A549 (cell line): ENCODE measurements at regions of chr2 and their contacts with region 1.

Region 1: DNA sequence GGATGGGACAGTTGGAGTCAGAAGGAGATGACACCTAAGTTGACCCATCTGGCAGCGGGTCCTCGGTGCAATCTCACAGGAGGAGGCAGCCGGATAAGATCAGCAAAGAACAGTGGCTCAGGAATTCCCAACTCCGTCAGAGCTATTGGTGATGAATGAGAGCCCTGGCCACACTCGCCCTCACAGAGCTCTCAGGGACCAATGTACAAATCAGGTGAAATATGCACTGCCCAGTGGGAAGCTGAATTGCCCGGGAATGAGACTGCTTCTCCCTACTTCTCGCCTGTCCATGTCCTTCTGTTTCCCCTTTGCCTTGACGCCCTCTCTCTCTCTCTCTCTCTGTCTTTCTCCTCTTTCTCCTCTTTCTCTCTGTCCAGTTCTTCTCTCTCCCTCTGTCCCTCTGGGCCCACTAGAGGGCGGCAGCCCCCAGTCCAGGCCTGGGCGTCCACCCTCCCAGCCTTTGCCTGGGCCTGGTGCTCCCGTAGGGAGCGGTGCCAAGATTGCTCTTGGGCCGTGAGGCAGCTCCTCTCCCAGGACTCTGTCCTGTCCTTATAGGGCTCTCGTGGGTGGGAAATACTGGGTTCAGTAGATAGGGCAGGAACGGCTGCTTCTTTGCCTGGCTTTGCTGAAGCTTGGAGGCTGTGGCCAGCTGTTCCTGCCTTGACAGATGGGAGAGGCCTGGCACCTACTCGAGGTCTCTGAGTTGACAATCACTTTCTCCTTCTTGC is 28.3 kb upstream of the PUM2 start:
- DNase-seq: peak; percentile 77 to 78
- ATAC-seq: peak; percentile 98 to 99
- H3K4me3 ChIP-seq: no peak overlapping the region
- H3K27ac ChIP-seq: peak overlapping the region; percentile 23 to 58; a peak in 4 of 6 replicates
- H3K4me1 ChIP-seq: peaks cover 10% of the 10 kb centered on the region; the same call in 1 of the 3 replicates
- CTCF ChIP-seq: peak; percentile 80
- EP300 ChIP-seq: no peak
- POLR2A ChIP-seq: no peak
- RAD21 ChIP-seq: peak; percentile 80 to 85

Region 2: GRCh38 chr2:20326163-20326780 is 52.7 kb before region 1 on chr2:
- CTCF ChIA-PET with region 1: interaction called, 10 read pairs
- POLR2A ChIA-PET with region 1: no interaction called
- DNase-seq: peak; percentile 50 to 66
- ATAC-seq: peak; percentile 97 to 98
- H3K4me3 ChIP-seq: no peak overlapping the region
- H3K27ac ChIP-seq: no peak overlapping the region
- H3K4me1 ChIP-seq: peaks cover 21% of the 10 kb centered on the region
- CTCF ChIP-seq: peak; percentile 95
- EP300 ChIP-seq: no peak
- POLR2A ChIP-seq: no peak
- RAD21 ChIP-seq: peak; percentile 69

Region 3: DNA sequence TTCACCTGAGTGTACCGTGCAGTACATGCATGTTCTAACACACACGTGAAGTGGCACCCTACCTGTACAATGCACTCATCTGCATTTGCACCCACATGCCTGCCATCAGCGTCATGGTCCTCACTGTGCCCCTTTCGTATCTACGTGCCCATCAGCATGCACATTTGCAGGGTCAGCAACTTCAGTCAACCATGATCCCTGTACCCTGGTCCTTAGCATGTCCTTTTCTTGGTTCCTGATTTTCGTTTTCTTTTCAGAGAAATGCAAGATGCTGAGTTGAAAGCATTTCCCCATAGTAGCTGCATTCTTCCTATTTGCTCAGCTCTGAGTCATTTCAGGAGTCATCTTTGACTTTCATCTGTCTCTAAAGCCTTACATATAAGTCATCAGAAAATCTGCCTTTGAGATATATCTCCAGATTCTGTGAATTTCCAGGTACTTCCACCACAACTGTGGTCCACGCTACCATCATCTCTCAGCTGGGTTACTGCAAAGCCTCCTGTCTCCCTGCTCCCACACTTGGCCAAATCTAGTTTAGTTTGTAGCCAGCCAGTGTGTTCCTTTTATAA is 13.6 kb before region 1 on chr2:
- CTCF ChIA-PET with region 1: interaction called, 53 read pairs
- POLR2A ChIA-PET with region 1: no interaction called
- DNase-seq: peak; percentile 45 to 55
- ATAC-seq: peak; percentile 89 to 93
- H3K4me3 ChIP-seq: no peak overlapping the region
- H3K27ac ChIP-seq: peak overlapping the region in 1 of 2 experiments; percentile 45; a peak in 3 of 6 replicates
- H3K4me1 ChIP-seq: peaks cover 13% of the 10 kb centered on the region
- CTCF ChIP-seq: no peak
- EP300 ChIP-seq: no peak
- POLR2A ChIP-seq: no peak
- RAD21 ChIP-seq: no peak

Region 4: DNA sequence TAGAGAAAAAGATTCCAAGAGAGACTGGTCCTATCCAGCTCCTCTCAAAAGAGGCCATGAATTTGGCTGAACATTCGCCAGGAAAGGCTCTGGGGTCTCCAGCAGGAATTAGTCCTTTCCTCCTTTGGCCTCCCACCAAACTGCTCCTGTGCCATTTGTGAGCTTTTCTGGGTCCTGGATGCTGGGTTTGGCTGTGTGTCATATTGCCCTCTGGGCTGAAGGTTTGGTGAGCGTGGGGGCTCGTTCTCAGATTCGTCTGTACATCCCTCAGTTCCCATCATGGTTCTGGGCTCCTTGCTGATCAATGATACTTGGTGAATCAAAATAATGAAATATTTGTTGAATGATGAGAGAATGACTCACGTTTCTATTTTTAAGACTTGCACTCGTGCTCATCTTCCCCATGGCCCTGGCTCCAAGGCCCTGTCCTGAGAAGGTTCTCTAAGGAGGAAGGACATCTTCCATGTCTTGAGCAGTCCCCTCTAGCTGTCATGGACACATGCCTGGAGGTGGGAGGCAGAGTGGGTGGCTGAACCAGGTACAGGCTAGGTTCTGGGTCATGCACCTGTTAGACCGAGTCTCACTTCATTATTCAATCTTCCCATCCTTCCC is 20.1 kb after region 1 on chr2:
- CTCF ChIA-PET with region 1: interaction called, 34 read pairs
- POLR2A ChIA-PET with region 1: no interaction called
- DNase-seq: no peak
- ATAC-seq: no peak
- H3K4me3 ChIP-seq: no peak overlapping the region
- H3K27ac ChIP-seq: no peak overlapping the region
- H3K4me1 ChIP-seq: no peaks in the 10 kb centered on the region
- CTCF ChIP-seq: no peak
- EP300 ChIP-seq: no peak
- POLR2A ChIP-seq: no peak
- RAD21 ChIP-seq: no peak

Region 5: DNA sequence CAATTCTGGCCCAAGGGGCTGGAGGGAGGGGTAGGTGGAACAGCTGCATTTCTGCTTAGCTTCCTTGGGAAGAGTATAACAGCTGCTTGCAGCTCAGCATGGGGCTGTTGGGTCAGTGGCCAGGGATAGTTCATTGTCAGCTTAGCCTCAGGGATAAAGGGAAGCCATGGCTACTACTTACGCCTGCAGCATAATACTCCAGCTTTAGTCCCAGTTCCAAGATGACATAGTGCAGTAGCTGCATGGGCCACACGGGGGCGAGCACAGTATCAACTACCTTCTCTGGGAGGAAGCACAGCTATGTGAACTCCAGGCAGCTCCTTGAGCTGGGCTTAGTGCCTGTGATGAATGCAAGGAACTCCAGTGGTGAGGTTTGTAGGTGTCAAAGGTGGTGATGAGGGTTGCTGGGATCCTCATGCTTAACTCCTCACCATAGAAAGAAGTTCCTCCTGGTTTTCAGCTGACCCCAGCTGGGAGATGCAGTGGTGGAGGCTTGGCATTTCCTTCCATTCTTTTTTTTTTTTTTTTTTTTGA is 32.5 kb after region 1 on chr2:
- CTCF ChIA-PET with region 1: interaction called, 32 read pairs
- POLR2A ChIA-PET with region 1: no interaction called
- DNase-seq: peak; percentile 79 to 86
- ATAC-seq: peak; percentile 100
- H3K4me3 ChIP-seq: no peak overlapping the region
- H3K27ac ChIP-seq: no peak overlapping the region
- H3K4me1 ChIP-seq: peaks cover 4% of the 10 kb centered on the region; the same call in 1 of the 3 replicates
- CTCF ChIP-seq: peak; percentile 81
- EP300 ChIP-seq: no peak
- POLR2A ChIP-seq: no peak
- RAD21 ChIP-seq: peak; percentile 79 to 86

Region 6: DNA sequence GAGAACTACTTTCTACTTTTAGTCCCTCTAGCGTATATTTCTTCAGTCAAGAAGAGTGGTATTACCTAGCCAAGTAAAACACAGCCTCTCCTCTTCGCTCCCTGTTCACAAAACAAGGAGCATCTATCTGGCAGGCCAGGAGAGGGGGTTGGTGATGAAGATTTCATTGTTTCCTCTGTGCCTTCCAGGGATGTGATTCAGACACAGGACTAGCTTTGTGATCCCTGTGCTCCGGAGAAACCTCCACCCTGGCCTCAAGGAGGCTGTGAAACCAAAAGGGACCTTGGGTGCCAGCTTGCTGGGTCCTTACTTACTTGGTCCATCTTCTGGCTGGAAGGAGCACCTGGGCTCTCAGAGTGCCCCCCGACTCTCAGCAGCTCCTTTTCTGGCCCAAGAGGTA is 73.6 kb after region 1 on chr2:
- CTCF ChIA-PET with region 1: interaction called, 11 read pairs
- POLR2A ChIA-PET with region 1: interaction called, 13 read pairs
- DNase-seq: peak in 1 of 2 experiments; percentile 61
- ATAC-seq: peak; percentile 14 to 31; a peak in 4 of 6 replicates
- H3K4me3 ChIP-seq: no peak overlapping the region
- H3K27ac ChIP-seq: peak overlapping the region in 1 of 2 experiments; percentile 15; a peak in 2 of 6 replicates
- H3K4me1 ChIP-seq: peaks cover 23% of the 10 kb centered on the region
- CTCF ChIP-seq: no peak
- EP300 ChIP-seq: no peak
- POLR2A ChIP-seq: no peak
- RAD21 ChIP-seq: peak; percentile 35 to 55; a peak in 2 of 5 replicates

Region 7: DNA sequence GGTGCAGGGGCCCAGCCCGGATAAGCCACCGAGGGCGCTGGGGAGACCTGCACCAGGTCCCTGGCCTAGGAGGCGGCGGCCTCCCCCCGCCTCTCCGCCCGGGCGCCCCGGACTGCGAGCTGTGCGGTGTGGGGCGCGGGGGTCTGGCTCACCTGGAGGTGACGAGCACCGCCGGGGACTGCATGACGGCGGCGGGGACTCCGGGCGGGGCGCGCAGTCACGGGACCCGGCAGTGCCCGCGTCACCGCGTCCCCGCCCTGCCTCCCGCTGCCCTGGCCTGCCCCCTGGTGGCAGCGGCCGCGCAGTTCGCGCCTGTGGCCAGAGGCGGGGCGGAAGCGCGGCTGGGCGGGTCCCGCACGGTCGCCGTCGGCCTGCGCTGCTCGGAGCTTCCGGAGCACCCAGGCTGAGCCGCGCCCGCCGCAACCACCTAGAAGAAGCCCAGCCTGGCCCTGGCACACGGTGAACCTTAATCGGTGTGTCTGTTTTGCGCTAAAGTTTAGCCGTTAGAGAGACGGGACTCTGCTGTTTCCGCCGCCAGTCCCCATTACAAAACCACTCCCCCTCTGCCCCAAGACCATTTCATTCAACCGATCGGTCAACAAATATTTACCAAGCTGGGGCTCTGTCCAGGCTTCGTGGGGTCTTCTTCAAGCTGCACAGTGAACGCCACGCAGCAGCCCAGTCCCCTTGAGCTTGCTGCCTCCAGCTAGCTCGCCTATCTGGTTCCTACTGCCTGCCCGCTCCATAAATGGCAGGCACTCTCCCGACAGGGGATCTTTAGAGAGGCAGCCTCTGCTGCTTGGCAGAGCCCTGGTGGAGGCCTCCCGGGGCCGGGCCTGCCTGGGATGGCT is 272.1 kb after region 1 on chr2 and contains the start of gene HS1BP3:
- CTCF ChIA-PET with region 1: interaction called, 22 read pairs
- POLR2A ChIA-PET with region 1: no interaction called
- DNase-seq: peak; percentile 82 to 85
- ATAC-seq: peak; percentile 82 to 97
- H3K4me3 ChIP-seq: peak within 1 kb of the TSS; percentile 89
- H3K27ac ChIP-seq: peak within 1 kb of the TSS; percentile 94
- H3K4me1 ChIP-seq: peaks cover 12% of the 10 kb centered on the region; the same call in 2 of the 3 replicates
- CTCF ChIP-seq: peak; percentile 99
- EP300 ChIP-seq: no peak
- POLR2A ChIP-seq: peak; percentile 92
- RAD21 ChIP-seq: peak; percentile 53 to 84
- polyA plus RNA-seq, gene HS1BP3: 12.4 and 13.8 TPM in 2 replicates